PC-3 (cell line): ENCODE measurements at regions of chr14 and their contacts with region 1.

Region 1: DNA sequence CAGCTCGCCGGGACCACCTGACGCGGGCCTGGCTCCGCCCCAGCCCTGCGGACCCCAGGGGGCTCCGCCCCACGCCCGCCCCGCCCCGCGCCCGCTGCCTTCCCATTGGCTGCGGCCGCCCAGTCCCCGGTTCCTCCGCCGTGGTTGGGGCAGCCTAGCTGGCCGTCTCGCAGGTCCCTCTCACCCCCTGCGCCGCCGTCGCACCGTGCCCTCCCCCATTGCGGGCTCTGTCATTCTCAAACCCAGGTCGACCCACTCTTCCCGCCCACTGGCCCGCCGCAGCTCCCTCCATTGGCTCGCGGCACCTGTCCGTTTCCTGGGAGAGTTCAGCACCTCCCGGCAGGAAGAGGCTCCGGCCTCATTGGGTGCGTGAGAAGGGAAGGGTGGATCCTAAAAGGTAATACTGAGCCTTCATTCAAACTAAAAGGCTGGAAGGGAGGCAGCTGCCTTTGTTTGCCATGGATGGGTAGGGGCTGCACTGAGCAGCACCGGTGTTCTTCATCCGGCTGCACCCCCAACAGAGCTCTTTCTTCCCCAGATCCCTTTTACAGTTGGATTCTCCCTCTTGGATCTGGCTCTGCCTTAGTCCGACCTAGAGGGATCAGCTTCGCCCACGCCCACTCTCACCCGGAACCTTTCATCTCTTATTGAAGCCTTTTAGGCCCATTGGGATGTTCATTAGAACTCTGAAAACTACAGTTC is 381 bp upstream of the MAP3K9 start:
- DNase-seq: peak; percentile 98
- ATAC-seq: peak; percentile 89
- H3K4me3 ChIP-seq: peak overlapping the region; percentile 83
- H3K27ac ChIP-seq: peak overlapping the region; percentile 13
- H3K4me1 ChIP-seq: peaks cover 39% of the 10 kb centered on the region
- H3K27me3 ChIP-seq: no peaks in the 10 kb centered on the region
- CTCF ChIP-seq: no peak

Region 2: DNA sequence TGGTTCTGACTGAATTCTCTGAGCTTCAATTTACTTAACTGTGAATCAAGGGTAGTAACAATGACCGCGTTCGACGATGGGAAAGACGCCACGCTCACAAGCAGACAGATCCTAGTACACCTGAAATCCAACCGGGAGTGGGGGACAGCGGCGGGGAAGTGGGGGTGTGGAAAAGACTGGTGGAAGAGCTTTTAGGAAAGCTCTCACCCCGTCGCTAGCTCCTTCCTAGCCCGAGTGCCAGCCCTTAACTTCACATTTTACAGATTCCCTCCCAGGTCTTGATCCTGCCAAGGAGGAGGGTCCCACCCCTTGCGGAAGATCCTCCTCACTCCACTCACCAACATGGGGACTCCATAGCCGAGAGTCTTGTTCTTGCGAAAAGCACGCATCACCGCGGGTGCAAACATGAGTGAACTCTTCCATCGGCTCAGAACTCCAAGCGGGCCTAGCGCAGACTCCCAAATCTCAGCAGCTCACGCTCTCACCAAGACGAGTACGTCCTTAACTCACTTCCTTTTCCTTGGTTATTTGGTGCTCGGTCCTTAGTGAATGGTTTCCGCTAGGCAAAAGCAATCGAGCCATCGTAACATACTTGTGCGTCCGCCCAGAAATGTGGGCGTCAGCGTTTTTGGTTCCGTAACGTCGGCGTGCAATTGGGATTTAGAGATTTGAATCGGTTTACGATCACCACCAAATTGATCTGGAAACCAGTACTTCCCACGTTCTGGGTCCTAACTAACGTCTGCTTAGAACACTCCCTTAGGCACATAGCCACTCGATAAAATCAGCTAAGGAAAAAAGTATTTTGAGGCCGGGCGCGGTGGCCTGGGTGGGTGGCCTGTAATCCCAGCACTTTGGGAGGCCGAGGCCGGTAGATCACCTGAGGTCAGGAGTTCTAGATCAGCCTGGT is 450.3 kb before region 1 on chr14 and contains the start of gene COX16:
- CTCF ChIA-PET with region 1: interaction called, 3 read pairs
- POLR2A ChIA-PET with region 1: no interaction called
- intact Hi-C with region 1: loop called (anchors 2 kb)
- DNase-seq: peak; percentile 96
- ATAC-seq: peak; percentile 93
- H3K4me3 ChIP-seq: peak within 1 kb of the TSS; percentile 88
- H3K27ac ChIP-seq: peak within 1 kb of the TSS; percentile 71
- H3K4me1 ChIP-seq: peaks cover 19% of the 10 kb centered on the region
- H3K27me3 ChIP-seq: no peaks in the 10 kb centered on the region
- CTCF ChIP-seq: no peak
- total RNA-seq, gene COX16: 54.1 and 60.1 TPM in 2 replicates

Region 3: GRCh38 chr14:70640938-70641547 is 168.7 kb before region 1 on chr14:
- CTCF ChIA-PET with region 1: no interaction called
- POLR2A ChIA-PET with region 1: no interaction called
- intact Hi-C with region 1: loop called (anchors 5 kb)
- DNase-seq: peak; percentile 69
- ATAC-seq: peak; percentile 78
- H3K4me3 ChIP-seq: peak overlapping the region; percentile 85
- H3K27ac ChIP-seq: no peak overlapping the region
- H3K4me1 ChIP-seq: peaks cover 17% of the 10 kb centered on the region; the same call in 1 of the 2 replicates
- H3K27me3 ChIP-seq: peaks cover 30% of the 10 kb centered on the region
- CTCF ChIP-seq: no peak

Region 4: DNA sequence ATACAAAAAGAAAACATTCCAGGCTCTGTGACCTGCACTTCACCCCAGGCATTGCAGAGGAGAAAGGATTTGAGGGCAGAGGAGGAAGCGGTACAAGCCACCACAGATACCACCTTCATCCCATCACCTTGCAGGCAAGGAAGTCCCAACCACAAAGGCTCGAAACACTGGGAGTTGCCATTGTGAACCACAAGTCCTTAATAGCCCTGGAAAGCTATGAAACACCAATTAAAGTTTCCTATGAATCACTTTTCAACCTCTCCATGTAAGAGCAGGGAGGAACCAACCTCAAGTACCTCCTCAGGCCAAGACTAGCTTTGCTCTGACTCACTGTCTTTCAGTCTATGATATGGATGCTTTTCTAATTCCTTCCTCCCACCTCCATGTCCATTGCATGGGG is 27.3 kb before region 1 on chr14:
- CTCF ChIA-PET with region 1: no interaction called
- POLR2A ChIA-PET with region 1: interaction called, 3 read pairs
- intact Hi-C with region 1: loop called (anchors 2 kb)
- DNase-seq: peak; percentile 95
- ATAC-seq: peak; percentile 93
- H3K4me3 ChIP-seq: no peak overlapping the region
- H3K27ac ChIP-seq: peak overlapping the region; percentile 86
- H3K4me1 ChIP-seq: peaks cover 43% of the 10 kb centered on the region
- H3K27me3 ChIP-seq: no peaks in the 10 kb centered on the region
- CTCF ChIP-seq: no peak

Region 5: GRCh38 chr14:70947711-70948110 is 138.0 kb after region 1 on chr14:
- CTCF ChIA-PET with region 1: no interaction called
- POLR2A ChIA-PET with region 1: interaction called, 16 read pairs
- intact Hi-C with region 1: no loop called
- DNase-seq: peak; percentile 10
- ATAC-seq: no peak
- H3K4me3 ChIP-seq: no peak overlapping the region
- H3K27ac ChIP-seq: no peak overlapping the region
- H3K4me1 ChIP-seq: no peaks in the 10 kb centered on the region
- H3K27me3 ChIP-seq: no peaks in the 10 kb centered on the region
- CTCF ChIP-seq: no peak